ENCODE measurements at regions of chr3 and their contacts with region 1.

Region 1: GRCh38 chr3:57755668-57756527 is at the start of gene SLMAP:
- DNase-seq: peak; percentile 77
- H3K4me3 ChIP-seq: peak within 1 kb of the TSS; percentile 98
- H3K27me3 ChIP-seq: no peaks in the 10 kb centered on the region
- CTCF ChIP-seq: no peak
- polyA plus RNA-seq, gene SLMAP: 24.1 and 28.6 TPM in 2 replicates

Region 2: DNA sequence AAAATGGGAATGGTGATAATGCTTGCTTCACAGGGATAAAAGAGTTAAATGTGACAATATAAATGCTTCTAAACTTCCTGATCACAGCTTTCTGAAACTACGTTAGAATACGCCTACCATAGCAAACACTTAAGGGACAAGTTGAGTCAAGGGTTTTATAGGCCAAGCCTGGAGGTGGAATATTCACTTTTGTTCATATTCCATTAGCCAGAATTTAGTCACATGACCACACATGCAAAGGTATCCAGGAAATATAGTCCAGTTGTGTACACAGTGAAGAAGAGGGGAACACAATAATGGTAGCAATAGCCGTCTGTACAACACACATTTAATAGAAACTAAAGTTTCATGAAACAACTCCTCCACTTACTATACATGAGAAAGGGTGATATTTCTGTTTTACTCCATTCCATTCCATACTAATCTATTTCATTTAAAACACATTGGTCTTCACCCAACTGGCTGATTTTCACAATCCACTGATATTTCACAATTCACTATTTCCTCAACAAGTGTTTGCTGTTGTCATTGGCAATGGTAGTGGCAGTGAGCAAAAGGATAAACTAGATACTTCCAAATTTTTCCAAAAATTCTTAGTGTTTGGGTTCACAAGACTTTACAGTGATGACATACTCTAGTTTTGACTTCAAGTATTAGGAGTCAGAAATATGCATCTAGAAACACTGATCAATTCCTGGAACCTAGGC is 1558.5 kb before region 1 on chr3:
- CTCF ChIA-PET with region 1: no interaction called
- POLR2A ChIA-PET with region 1: no interaction called
- DNase-seq: no peak
- H3K4me3 ChIP-seq: no peak overlapping the region
- H3K27me3 ChIP-seq: no peaks in the 10 kb centered on the region
- CTCF ChIP-seq: no peak

Region 3: DNA sequence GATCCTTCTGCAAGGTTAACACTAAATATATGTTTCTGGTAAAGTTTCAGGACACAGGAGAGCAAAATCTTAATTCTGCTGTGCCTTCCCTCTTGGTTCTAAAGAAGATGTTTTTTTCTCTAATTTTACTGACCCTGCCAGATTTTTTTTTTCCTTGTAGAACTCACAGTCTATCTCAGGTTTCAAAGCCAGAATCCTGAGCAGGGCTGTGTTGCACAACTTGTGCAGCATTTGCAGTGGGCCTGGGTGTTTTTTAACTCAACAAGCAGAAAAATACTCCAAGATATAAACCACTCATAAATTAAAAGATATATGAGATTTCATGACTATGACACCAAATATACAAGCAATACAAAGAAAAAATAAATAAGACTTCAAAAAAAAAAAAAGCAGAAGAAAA is 118.5 kb before region 1 on chr3:
- CTCF ChIA-PET with region 1: no interaction called
- POLR2A ChIA-PET with region 1: no interaction called
- DNase-seq: no peak
- H3K4me3 ChIP-seq: no peak overlapping the region
- H3K27me3 ChIP-seq: no peaks in the 10 kb centered on the region
- CTCF ChIP-seq: no peak

Region 4: DNA sequence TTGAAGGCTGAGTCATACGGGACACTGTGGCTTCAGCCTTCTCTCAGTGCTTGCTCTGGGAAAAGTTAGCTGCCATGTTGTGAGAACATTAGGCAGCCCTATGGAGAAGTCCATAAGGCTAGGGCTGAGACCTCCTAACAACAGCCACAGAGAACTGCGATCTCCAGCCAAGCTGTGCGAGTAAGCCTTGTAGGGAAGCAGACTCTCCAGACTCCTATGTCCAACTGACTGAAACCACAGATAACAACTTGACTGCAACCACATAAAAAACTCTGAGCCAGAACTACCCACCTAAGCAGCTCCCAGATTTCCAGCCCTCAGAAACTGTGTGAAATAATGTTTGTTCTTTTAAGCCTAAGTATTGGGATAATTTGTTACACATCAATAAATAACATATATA is 103.7 kb before region 1 on chr3:
- CTCF ChIA-PET with region 1: no interaction called
- POLR2A ChIA-PET with region 1: interaction called, 12 read pairs
- DNase-seq: no peak
- H3K4me3 ChIP-seq: no peak overlapping the region
- H3K27me3 ChIP-seq: no peaks in the 10 kb centered on the region
- CTCF ChIP-seq: no peak